ENCODE measurements at regions of chr1 and their contacts with region 1.

Region 1: DNA sequence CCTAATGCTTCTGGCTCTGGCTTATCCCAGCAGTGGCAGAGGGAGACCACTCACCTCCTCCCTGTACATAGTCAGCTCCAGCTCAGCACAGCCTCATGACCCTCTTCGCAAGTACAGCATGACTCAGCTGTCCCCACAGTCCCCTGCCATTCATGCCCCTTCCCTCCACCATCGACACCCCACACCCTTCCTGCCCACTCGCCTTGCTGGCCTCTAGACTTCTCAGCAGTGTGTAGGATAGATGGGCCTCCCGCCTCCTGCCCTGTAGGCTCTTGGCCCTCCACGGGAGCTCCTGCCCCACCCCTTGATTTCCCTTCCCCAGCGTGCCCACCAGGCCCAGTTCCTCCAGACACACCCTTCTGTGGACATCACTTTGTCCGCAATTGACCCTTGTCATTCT is 9.8 kb downstream of the NPR1 start:
- DNase-seq: no peak
- ATAC-seq: no peak
- H3K4me3 ChIP-seq: no peak overlapping the region
- H3K27ac ChIP-seq: no peak overlapping the region
- H3K4me1 ChIP-seq: no peaks in the 10 kb centered on the region
- H3K27me3 ChIP-seq: no peaks in the 10 kb centered on the region
- CTCF ChIP-seq: no peak
- POLR2A ChIP-seq: no peak

Region 2: DNA sequence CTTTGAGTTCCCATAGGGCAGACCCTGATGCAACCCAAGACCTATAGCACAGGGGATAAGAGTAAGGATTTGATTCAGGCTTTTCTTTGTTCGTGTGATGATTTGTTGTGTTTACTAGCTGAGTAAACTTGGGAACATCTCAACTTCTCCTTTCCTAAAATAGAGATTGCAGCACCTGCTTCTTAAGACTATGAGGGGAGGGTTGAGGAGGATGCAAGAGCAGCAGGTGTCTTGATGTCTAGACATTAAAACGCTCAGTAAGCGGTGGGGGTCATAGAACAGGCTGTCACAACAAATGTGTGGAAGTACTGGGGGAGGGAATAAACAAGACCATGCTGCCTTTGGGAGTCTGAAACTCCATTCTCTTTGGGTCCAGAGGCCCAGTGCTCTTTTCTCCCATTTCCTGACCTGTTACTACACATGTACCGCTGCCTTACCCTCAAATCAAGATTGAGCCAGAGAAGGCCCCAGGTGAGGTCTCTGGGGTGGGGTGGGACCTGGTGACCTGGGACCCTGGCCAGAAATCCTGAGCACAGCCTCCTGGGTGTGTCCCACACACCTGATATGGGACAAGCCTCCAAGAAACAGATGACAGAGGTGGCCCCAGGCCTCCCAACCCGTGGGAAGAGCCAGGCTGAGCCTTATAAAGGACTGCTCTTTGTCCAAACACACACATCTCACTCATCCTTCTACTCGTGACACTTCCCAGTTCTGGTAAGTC is 272.3 kb before region 1 on chr1 and contains the start of gene S100A7A:
- intact Hi-C with region 1: no loop called
- DNase-seq: no peak
- ATAC-seq: no peak
- H3K4me3 ChIP-seq: no peak within 1 kb of the TSS
- H3K27ac ChIP-seq: no peak within 1 kb of the TSS
- H3K4me1 ChIP-seq: no peaks in the 10 kb centered on the region
- H3K27me3 ChIP-seq: no peaks in the 10 kb centered on the region
- CTCF ChIP-seq: no peak
- POLR2A ChIP-seq: no peak
- total RNA-seq, gene S100A7A: not detected

Region 3: GRCh38 chr1:153553830-153554541 is 134.3 kb before region 1 on chr1:
- intact Hi-C with region 1: no loop called
- DNase-seq: no peak
- ATAC-seq: peak; percentile 54
- H3K4me3 ChIP-seq: no peak overlapping the region
- H3K27ac ChIP-seq: peak overlapping the region in 3 of 4 donors; percentile 52 to 60 (median 59)
- H3K4me1 ChIP-seq: peaks cover 19% of the 10 kb centered on the region
- H3K27me3 ChIP-seq: no peaks in the 10 kb centered on the region
- CTCF ChIP-seq: no peak
- POLR2A ChIP-seq: no peak

Region 4: DNA sequence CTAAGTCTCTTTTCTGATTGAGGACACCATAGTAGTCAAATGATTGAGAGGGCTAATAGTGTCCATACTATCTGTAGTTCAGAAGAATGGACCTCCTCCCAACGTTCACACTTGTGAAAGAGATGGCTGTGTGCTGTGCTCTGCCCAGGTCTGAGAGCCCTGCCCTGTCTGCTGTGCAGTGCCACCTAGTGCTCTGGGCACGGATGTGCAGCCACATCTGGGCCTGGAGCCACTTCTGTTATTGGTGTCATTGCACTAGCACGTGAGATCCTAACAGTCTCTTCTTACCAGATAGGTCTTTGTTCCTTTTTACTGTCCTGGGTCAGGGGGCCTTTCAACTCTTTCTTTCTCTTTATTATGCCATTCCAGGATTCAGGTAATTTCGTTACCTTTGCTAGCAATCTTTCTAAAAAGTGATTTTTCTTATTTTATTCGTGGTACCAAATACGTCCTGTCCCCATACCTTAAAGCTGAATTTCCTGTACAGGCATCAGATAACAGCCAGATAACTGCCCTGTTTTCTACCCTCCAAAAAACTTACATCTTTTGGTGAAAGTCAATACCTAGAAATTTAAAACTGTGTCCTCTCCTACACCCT is 61.2 kb after region 1 on chr1:
- intact Hi-C with region 1: loop called (anchors 5 kb)
- DNase-seq: peak; percentile 83 to 88 (median 86)
- ATAC-seq: peak; percentile 97
- H3K4me3 ChIP-seq: no peak overlapping the region
- H3K27ac ChIP-seq: no peak overlapping the region
- H3K4me1 ChIP-seq: peaks cover 3% of the 10 kb centered on the region
- H3K27me3 ChIP-seq: no peaks in the 10 kb centered on the region
- CTCF ChIP-seq: peak; percentile 80 to 95 (median 92)
- POLR2A ChIP-seq: no peak

Measured in body of pancreas (tissue), 4 donors.